Activated CD4-positive, alpha-beta memory T cell treated with anti-CD3 and anti-CD28 coated beads for 36 hours (primary cell): ENCODE measurements at regions of chr2 and their contacts with region 1.

Region 1: DNA sequence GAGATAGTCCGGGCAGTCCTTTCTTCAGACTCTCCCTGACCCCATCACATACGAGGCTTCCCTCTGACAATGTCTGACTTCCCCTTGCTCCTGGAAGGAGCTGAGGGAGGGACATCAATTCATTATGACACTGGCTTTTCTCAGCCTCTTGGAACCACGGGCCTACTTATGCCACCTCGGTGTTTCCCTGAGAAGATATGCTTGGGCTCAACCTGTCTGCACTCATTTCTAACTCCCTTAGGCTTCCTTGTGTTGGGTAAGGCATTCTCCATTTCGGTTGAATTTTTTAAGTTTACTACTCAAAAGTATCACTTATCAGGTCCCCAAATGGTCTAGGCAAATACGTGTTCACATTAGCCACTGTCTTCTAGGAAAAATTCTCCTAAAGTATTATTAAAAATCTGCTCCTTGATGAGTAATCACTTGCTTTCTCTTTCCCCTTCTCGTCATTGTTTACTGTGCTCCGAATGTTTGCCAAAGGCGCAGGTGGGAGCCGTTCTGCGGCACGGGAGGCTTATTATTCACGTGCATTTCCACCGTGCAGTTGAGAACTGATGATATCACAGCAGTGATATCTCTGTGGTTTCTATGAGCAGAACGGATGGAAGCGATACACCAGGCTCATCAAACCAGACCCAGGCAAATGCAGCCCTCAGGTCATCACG is 33.1 kb downstream of the ARL4C start:
- DNase-seq: peak; percentile 85
- H3K4me3 Mint-ChIP-seq: peak overlapping the region; percentile 71
- H3K27ac Mint-ChIP-seq: peak overlapping the region; percentile 91
- H3K4me1 Mint-ChIP-seq: peaks cover 68% of the 10 kb centered on the region
- H3K27me3 Mint-ChIP-seq: no peaks in the 10 kb centered on the region

Region 2: GRCh38 chr2:234308813-234309195 is 155.0 kb before region 1 on chr2:
- CTCF ChIA-PET with region 1: no interaction called
- POLR2A ChIA-PET with region 1: no interaction called
- intact Hi-C with region 1: loop called (anchors 1 kb)
- DNase-seq: peak; percentile 88
- H3K4me3 Mint-ChIP-seq: peak overlapping the region; percentile 38
- H3K27ac Mint-ChIP-seq: peak overlapping the region; percentile 89
- H3K4me1 Mint-ChIP-seq: peaks cover 56% of the 10 kb centered on the region
- H3K27me3 Mint-ChIP-seq: no peaks in the 10 kb centered on the region

Region 3: DNA sequence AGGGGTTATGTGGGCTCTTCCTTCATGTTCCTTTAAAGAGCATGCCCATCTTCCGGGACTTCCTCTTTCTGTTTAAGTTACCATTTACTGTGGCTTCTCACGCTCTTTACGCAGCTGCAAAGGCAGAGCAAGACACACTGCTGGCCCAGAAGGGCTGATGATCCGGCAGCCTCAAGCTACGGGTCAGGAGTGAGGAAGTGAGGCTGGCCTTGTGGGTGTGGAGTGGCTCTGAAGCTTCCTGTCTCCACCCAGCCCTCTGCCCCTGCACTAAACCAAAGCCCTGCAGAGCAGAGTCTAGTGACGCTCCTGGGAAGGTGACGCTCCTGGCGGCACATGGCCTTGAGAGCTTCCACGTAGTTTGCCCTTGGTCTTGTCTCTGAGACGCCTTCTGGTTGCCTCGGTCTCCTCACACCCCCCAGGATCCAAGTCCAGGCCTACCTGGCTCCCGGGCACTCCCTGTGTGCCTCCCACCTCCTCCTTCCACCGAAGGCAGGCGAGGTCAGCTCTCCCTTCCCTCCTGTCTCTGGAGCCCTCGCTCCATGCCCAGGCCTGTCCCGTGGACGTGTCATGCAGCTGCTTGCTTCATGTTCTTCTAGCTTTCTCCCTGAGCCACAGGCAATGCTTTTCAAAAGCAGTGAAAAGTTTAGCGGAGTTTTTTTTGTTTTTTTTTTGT is 17.2 kb before region 1 on chr2:
- CTCF ChIA-PET with region 1: interaction called, 8 read pairs
- POLR2A ChIA-PET with region 1: interaction called, 3 read pairs
- intact Hi-C with region 1: loop called (anchors 2 kb)
- DNase-seq: peak; percentile 89
- H3K4me3 Mint-ChIP-seq: peak overlapping the region; percentile 66
- H3K27ac Mint-ChIP-seq: peak overlapping the region; percentile 95
- H3K4me1 Mint-ChIP-seq: peaks cover 73% of the 10 kb centered on the region
- H3K27me3 Mint-ChIP-seq: no peaks in the 10 kb centered on the region

Region 4: DNA sequence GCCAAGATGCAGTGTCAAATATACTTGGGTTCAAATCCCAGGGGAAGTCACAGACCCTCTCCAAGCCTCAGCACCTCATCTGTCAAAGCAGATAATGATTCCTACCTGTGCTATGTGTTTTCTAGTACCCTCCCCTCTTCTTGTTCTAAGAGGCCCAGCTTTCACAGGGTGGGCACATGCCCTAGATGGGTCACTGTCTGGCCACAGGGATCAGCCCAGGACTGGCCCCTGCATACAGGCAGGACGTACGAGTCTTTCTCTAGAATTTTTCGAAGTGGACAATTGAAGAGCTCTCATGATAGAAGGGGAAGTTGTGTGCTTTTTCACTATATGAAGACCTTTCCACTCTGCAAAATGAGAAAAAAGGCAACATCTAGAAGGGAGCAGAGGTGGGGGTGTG is 10.9 kb after region 1 on chr2:
- CTCF ChIA-PET with region 1: interaction called, 3 read pairs
- POLR2A ChIA-PET with region 1: interaction called, 6 read pairs
- intact Hi-C with region 1: loop called (anchors 1 kb)
- DNase-seq: no peak
- H3K4me3 Mint-ChIP-seq: no peak overlapping the region
- H3K27ac Mint-ChIP-seq: peak overlapping the region; percentile 88
- H3K4me1 Mint-ChIP-seq: peaks cover 57% of the 10 kb centered on the region
- H3K27me3 Mint-ChIP-seq: no peaks in the 10 kb centered on the region

Region 5: GRCh38 chr2:234488913-234489451 is 25.2 kb after region 1 on chr2:
- CTCF ChIA-PET with region 1: interaction called, 12 read pairs
- POLR2A ChIA-PET with region 1: interaction called, 7 read pairs
- intact Hi-C with region 1: loop called (anchors 1 kb)
- DNase-seq: peak; percentile 85
- H3K4me3 Mint-ChIP-seq: peak overlapping the region; percentile 77
- H3K27ac Mint-ChIP-seq: peak overlapping the region; percentile 97
- H3K4me1 Mint-ChIP-seq: peaks cover 89% of the 10 kb centered on the region
- H3K27me3 Mint-ChIP-seq: no peaks in the 10 kb centered on the region

Region 6: GRCh38 chr2:234528410-234529148 is 64.8 kb after region 1 on chr2:
- CTCF ChIA-PET with region 1: no interaction called
- POLR2A ChIA-PET with region 1: no interaction called
- intact Hi-C with region 1: no loop called
- DNase-seq: no peak
- H3K4me3 Mint-ChIP-seq: no peak overlapping the region
- H3K27ac Mint-ChIP-seq: no peak overlapping the region
- H3K4me1 Mint-ChIP-seq: no peaks in the 10 kb centered on the region
- H3K27me3 Mint-ChIP-seq: peaks cover 18% of the 10 kb centered on the region